Activated B cell treated with CpG ODN at 0.5 μM for 24 hours (primary cell): ENCODE measurements at regions of chr14 and their contacts with region 1.

Region 1: DNA sequence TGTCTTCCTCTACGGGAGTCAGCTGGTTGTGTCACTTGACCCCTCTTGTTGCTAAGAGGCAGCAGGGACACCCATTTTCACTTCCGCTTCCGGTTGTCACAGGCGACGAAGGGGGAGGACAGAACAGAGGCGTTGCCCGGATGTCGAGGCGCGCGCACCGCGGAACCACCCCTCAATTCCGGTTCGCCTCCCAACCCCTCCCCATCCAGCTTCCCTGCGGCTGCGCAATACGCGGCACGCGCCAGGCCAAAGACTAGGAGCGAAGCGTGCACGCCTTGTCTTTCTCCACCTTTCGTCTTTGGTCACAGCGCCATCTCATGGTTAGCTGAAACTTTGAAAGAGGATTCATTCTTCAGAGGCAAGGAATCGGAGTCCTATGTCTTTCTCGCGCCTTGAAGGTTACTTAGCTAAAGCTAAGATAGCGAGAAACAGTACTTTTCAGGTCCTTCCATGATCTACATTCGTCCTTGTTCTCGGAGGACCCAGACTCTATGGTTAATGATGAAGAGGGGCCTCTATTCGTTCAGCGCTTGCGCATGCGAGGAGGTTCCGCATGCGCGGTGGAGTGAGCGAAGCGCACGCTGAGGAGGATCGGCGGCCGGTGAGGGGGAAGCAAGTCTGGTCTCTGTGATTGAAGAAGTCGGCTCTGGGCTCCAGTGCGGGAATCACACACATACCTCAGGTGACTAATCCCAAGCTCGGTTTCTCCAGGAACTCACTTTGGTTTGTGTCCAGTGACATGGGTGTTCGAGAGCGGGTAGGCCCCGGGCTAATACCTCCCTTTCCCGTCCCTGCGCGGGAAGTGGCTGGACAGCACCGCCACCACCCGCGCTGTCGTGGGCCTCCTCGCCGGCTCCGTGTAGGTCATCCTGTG is at the starts of genes ATP6V1D and EIF2S1:
- DNase-seq: peak; percentile 97
- ATAC-seq: peak; percentile 91
- H3K4me3 Mint-ChIP-seq: peak within 1 kb of the TSS; percentile 99
- H3K27ac Mint-ChIP-seq: peak within 1 kb of the TSS; percentile 97
- H3K4me1 Mint-ChIP-seq: peaks cover 60% of the 10 kb centered on the region
- H3K27me3 Mint-ChIP-seq: no peaks in the 10 kb centered on the region
- CTCF ChIP-seq: peak; percentile 95
- total RNA-seq, gene ATP6V1D: 27.8 and 29.4 TPM in 2 replicates
- total RNA-seq, gene EIF2S1: 84.4 and 96.7 TPM in 2 replicates

Region 2: GRCh38 chr14:66359500-66359899 is 1000.5 kb before region 1 on chr14:
- CTCF ChIA-PET with region 1: no interaction called
- POLR2A ChIA-PET with region 1: no interaction called
- intact Hi-C with region 1: loop called (anchors 1 kb)
- DNase-seq: no peak
- ATAC-seq: no peak
- H3K4me3 Mint-ChIP-seq: no peak overlapping the region
- H3K27ac Mint-ChIP-seq: no peak overlapping the region
- H3K4me1 Mint-ChIP-seq: no peaks in the 10 kb centered on the region
- H3K27me3 Mint-ChIP-seq: no peaks in the 10 kb centered on the region
- CTCF ChIP-seq: peak; percentile 46

Region 3: DNA sequence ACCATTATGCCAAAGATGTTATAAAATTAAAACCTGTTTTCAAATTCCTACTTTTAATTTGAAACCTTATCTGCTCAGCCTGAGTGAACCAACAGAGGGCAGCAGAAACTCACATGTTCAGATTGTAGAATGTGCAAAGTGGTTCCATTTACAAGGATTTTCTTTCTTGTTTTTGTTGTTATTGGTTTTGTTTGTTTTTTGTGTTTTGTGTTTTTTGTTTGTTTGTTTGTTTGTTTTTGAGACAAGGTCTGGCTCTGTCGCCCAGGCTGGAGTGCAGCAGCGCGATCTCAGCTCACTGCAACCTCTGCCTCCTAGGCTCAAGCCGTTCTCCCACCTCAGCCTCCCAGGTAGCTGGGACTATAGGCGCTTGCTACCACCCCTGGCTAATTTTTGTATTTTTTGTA is 193.6 kb before region 1 on chr14:
- CTCF ChIA-PET with region 1: interaction called, 3 read pairs
- POLR2A ChIA-PET with region 1: no interaction called
- intact Hi-C with region 1: loop called (anchors 1 kb)
- DNase-seq: no peak
- ATAC-seq: no peak
- H3K4me3 Mint-ChIP-seq: no peak overlapping the region
- H3K27ac Mint-ChIP-seq: no peak overlapping the region
- H3K4me1 Mint-ChIP-seq: no peaks in the 10 kb centered on the region
- H3K27me3 Mint-ChIP-seq: no peaks in the 10 kb centered on the region
- CTCF ChIP-seq: no peak

Region 4: GRCh38 chr14:67599698-67600561 is 239.9 kb after region 1 on chr14 and contains the start of gene PIGH:
- CTCF ChIA-PET with region 1: interaction called, 3 read pairs
- POLR2A ChIA-PET with region 1: interaction called, 5 read pairs
- intact Hi-C with region 1: loop called (anchors 5 kb)
- DNase-seq: peak; percentile 99
- ATAC-seq: peak; percentile 90
- H3K4me3 Mint-ChIP-seq: peak within 1 kb of the TSS; percentile 96
- H3K27ac Mint-ChIP-seq: peak within 1 kb of the TSS; percentile 95
- H3K4me1 Mint-ChIP-seq: peaks cover 61% of the 10 kb centered on the region
- H3K27me3 Mint-ChIP-seq: no peaks in the 10 kb centered on the region
- CTCF ChIP-seq: no peak
- total RNA-seq, gene PIGH: 21.9 and 26.4 TPM in 2 replicates

Region 5: DNA sequence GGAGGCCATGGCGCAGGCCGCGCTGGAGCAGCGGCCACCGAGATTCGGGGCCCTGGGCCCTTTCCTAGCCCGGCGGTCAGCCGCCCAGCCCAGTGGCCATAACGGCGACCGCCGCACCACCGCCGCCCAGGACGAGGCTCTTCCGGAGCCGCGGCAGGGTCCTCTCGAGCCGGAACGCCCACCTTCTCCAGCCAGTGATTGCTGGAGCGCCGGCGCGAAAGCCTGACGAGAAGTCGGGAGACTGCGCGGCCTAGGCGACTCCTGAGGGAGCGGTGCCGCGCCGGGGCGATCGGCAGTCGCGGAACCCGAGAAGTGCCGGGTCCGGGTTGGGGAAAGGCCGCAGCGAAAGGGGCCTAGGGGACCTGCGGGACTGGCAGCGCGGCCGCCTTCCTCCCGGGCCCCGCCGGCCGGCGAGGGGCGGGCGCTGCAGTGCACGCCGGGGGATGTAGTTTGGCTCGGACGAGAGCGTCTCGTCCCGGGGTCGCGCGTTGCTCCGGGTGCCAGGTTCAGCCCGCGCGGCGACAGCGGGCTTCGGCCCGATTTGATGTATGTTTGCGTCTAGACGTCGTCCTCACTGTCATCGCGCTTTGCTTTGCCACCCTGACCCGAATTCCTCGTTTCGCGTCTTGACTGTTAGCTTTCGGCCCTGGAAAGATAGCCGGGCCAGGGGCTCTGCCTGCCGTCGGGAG is 314.6 kb after region 1 on chr14 and contains the start of gene VTI1B:
- CTCF ChIA-PET with region 1: no interaction called
- POLR2A ChIA-PET with region 1: interaction called, 3 read pairs
- intact Hi-C with region 1: loop called (anchors 1 kb)
- DNase-seq: peak; percentile 86
- ATAC-seq: peak; percentile 93
- H3K4me3 Mint-ChIP-seq: peak within 1 kb of the TSS; percentile 89
- H3K27ac Mint-ChIP-seq: peak within 1 kb of the TSS; percentile 89
- H3K4me1 Mint-ChIP-seq: peaks cover 36% of the 10 kb centered on the region
- H3K27me3 Mint-ChIP-seq: no peaks in the 10 kb centered on the region
- CTCF ChIP-seq: no peak
- total RNA-seq, gene VTI1B: 76.3 and 78.9 TPM in 2 replicates

Region 6: GRCh38 chr14:67816326-67817002 is 456.5 kb after region 1 on chr14 and contains the start of gene ZFYVE26:
- CTCF ChIA-PET with region 1: no interaction called
- POLR2A ChIA-PET with region 1: interaction called, 3 read pairs
- intact Hi-C with region 1: loop called (anchors 2 kb)
- DNase-seq: peak; percentile 70
- ATAC-seq: peak; percentile 85
- H3K4me3 Mint-ChIP-seq: peak within 1 kb of the TSS; percentile 94
- H3K27ac Mint-ChIP-seq: peak within 1 kb of the TSS; percentile 95
- H3K4me1 Mint-ChIP-seq: peaks cover 63% of the 10 kb centered on the region
- H3K27me3 Mint-ChIP-seq: no peaks in the 10 kb centered on the region
- CTCF ChIP-seq: no peak
- total RNA-seq, gene ZFYVE26: 40.7 and 41.1 TPM in 2 replicates